ENCODE measurements at regions of chr4 and their contacts with region 1.

Region 1: GRCh38 chr4:154854362-154854761 is 73.3 kb downstream of the RBM46 start:
- DNase-seq: no peak
- ATAC-seq: no peak
- H3K4me3 ChIP-seq: no peak overlapping the region
- H3K27ac ChIP-seq: no peak overlapping the region
- H3K4me1 ChIP-seq: no peaks in the 10 kb centered on the region
- H3K27me3 ChIP-seq: no peaks in the 10 kb centered on the region
- CTCF ChIP-seq: peak in 3 of 12 donors; percentile 5 to 19 (median 11)
- POLR2A ChIP-seq: no peak

Region 2: DNA sequence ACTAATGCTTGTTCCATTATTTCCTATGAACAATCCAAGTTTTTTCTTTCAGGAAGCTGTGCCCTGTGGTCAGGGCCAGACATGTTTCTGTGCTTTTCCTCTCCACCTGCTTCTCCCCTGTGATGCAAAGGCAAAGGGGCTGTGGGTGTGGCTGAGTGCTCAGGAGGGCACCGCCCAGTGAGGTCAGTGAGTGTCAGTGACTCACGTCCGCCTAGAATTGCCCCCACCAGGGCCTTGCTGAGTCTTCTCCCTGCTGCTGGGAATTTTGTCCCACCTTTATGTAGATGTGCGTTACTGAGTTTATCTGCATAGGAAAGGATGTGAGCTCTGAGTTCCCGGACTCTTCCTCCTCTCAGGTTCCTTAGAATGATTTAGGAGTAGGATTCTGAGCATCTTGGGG is 645.9 kb before region 1 on chr4:
- intact Hi-C with region 1: no loop called
- DNase-seq: no peak
- ATAC-seq: no peak
- H3K4me3 ChIP-seq: no peak overlapping the region
- H3K27ac ChIP-seq: no peak overlapping the region
- H3K4me1 ChIP-seq: no peaks in the 10 kb centered on the region
- H3K27me3 ChIP-seq: no peaks in the 10 kb centered on the region
- CTCF ChIP-seq: no peak
- POLR2A ChIP-seq: no peak

Region 3: DNA sequence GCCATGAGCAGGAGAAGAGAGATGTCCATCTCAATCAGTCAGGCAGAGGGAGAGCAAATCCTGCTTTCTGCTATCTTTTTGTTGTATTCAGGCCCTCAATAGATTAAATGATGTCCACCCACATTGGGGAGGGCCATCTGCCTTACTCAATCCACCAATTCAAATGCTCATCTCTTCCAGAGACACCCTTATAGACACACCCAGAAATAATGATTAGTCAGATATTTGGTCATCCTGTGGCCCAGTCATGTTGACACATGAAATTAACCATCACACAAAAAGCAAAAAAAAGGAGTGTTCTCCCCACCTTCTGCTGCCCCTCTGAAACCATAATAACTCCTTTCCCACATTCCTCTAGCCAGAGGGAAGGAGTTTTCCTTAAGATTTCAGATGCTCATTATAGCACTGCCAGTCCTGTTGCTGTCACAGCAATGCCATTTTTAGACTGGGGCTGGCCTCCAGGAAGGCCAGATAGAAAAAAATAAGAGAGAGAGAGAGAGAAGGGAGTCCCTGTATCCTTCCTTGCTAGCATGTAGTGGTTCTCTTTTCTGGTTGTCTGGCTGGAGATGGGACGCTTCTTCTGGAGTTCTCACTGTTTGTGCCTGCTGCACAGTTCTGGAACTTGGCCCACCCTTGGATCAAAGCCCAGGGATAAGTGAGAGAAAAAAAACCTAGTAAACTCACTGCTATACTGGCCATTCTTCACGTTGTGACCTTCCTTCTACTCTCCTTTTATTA is 104.4 kb after region 1 on chr4:
- intact Hi-C with region 1: no loop called
- DNase-seq: peak; percentile 39 to 73 (median 61)
- ATAC-seq: peak; percentile 67 to 86 (median 74)
- H3K4me3 ChIP-seq: no peak overlapping the region
- H3K27ac ChIP-seq: peak overlapping the region in 5 of 12 donors; percentile 33 to 45 (median 42)
- H3K4me1 ChIP-seq: peaks cover 0 to 23% (median 5%) of the 10 kb centered on the region in 12 donors
- H3K27me3 ChIP-seq: no peaks in the 10 kb centered on the region
- CTCF ChIP-seq: no peak
- POLR2A ChIP-seq: no peak

Region 4: GRCh38 chr4:155371432-155372043 is 517.2 kb after region 1 on chr4:
- intact Hi-C with region 1: loop called in 1 of 10 experiments (anchors 5 kb)
- DNase-seq: no peak
- ATAC-seq: no peak
- H3K4me3 ChIP-seq: no peak overlapping the region
- H3K27ac ChIP-seq: no peak overlapping the region
- H3K4me1 ChIP-seq: peaks cover 0 to 12% (median 7%) of the 10 kb centered on the region in 12 donors
- H3K27me3 ChIP-seq: peaks cover 0 to 18% (median 0%) of the 10 kb centered on the region in 9 donors
- CTCF ChIP-seq: peak; percentile 31 to 57 (median 38)
- POLR2A ChIP-seq: no peak